GM12878 (cell line): ENCODE measurements at regions of chr13 and their contacts with region 1.

Region 1: GRCh38 chr13:110444226-110444653 is 117.3 kb downstream of the RAB20 start:
- DNase-seq: no peak
- ATAC-seq: peak; percentile 74
- H3K4me3 ChIP-seq: peak overlapping the region; percentile 30; the same call in 1 of the 2 replicates
- H3K27ac ChIP-seq: peak overlapping the region; percentile 45
- H3K4me1 ChIP-seq: peaks cover 41% of the 10 kb centered on the region
- H3K27me3 ChIP-seq: no peaks in the 10 kb centered on the region
- CTCF ChIP-seq: peak; percentile 44 to 60 (median 54)
- EP300 ChIP-seq: peak in 1 of 2 experiments; percentile 30; a peak in 1 of 4 replicates
- POLR2A ChIP-seq: no peak
- RAD21 ChIP-seq: peak; percentile 81

Region 2: DNA sequence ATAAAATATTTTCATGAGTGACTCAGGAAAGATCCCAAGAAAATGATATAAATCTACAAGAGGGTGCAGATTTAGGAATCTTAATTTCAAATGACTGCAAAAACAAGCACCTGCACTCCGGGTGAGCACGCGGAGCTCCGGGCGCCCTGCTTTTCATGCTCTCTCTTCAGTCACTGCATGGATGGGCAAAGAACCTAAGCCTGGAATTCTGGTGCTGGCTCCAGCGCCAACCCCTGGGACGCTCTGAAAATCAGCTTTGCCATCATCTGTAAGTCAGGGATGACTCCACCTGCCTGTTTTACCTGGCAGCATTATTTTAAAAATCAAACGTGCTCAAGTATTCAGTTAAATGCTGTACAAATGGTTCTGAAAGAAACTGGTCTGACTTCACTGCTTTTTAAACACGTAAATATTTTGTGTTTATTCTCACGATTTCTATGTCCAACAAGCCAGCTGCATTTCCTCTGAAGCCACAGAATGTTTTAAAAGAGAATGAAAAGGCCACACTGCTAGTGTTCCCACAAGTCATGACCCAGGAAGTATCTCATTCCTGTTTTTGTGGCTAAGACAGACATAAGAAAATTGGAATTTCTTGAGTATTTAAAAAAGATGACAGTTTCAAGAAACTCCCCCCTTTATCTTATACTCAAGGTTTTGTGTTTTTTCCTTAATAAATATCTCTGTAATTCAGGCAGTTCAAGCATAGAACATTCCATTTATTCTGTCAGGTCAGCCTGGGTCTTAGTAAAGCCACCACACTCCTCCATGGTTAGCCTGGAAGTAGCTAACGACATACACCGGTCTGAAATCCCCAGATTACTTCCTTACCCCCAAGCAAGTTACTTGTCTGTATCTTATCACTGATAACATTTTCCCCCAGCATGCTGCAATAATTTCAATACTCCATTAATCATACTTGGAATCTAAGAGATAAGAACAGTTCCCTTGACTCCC is 218.4 kb before region 1 on chr13:
- CTCF ChIA-PET with region 1: interaction called, 138 read pairs
- POLR2A ChIA-PET with region 1: interaction called, 6 read pairs
- RAD21 ChIA-PET with region 1: interaction called, 66 read pairs
- SMC1A ChIA-PET with region 1: interaction called, 91 read pairs
- in situ Hi-C with region 1: loop called (anchors 5 kb)
- intact Hi-C with region 1: loop called (anchors 1 kb)
- DNase-seq: no peak
- ATAC-seq: no peak
- H3K4me3 ChIP-seq: no peak overlapping the region
- H3K27ac ChIP-seq: no peak overlapping the region
- H3K4me1 ChIP-seq: no peaks in the 10 kb centered on the region
- H3K27me3 ChIP-seq: no peaks in the 10 kb centered on the region; a peak in 1 of 4 replicates
- CTCF ChIP-seq: no peak
- EP300 ChIP-seq: no peak
- POLR2A ChIP-seq: no peak
- RAD21 ChIP-seq: no peak

Region 3: GRCh38 chr13:110250258-110250891 is 193.9 kb before region 1 on chr13:
- CTCF ChIA-PET with region 1: interaction called, 24 read pairs
- POLR2A ChIA-PET with region 1: no interaction called
- RAD21 ChIA-PET with region 1: interaction called, 15 read pairs
- SMC1A ChIA-PET with region 1: interaction called, 19 read pairs
- in situ Hi-C with region 1: no loop called
- intact Hi-C with region 1: no loop called
- DNase-seq: no peak
- ATAC-seq: peak; percentile 30; the same call in 1 of the 3 replicates
- H3K4me3 ChIP-seq: no peak overlapping the region
- H3K27ac ChIP-seq: no peak overlapping the region
- H3K4me1 ChIP-seq: no peaks in the 10 kb centered on the region
- H3K27me3 ChIP-seq: no peaks in the 10 kb centered on the region
- CTCF ChIP-seq: no peak
- EP300 ChIP-seq: no peak
- POLR2A ChIP-seq: no peak
- RAD21 ChIP-seq: no peak

Region 4: GRCh38 chr13:110412132-110412914 is 31.9 kb before region 1 on chr13:
- CTCF ChIA-PET with region 1: interaction called, 41 read pairs
- POLR2A ChIA-PET with region 1: no interaction called
- RAD21 ChIA-PET with region 1: interaction called, 20 read pairs
- SMC1A ChIA-PET with region 1: interaction called, 21 read pairs
- in situ Hi-C with region 1: no loop called
- intact Hi-C with region 1: loop called (anchors 2 kb)
- DNase-seq: peak; percentile 40
- ATAC-seq: peak; percentile 87
- H3K4me3 ChIP-seq: no peak overlapping the region
- H3K27ac ChIP-seq: no peak overlapping the region
- H3K4me1 ChIP-seq: peaks cover 4% of the 10 kb centered on the region
- H3K27me3 ChIP-seq: no peaks in the 10 kb centered on the region
- CTCF ChIP-seq: peak; percentile 89 to 94 (median 93)
- EP300 ChIP-seq: no peak
- POLR2A ChIP-seq: no peak
- RAD21 ChIP-seq: peak; percentile 85

Region 5: GRCh38 chr13:110471833-110472162 is 27.6 kb after region 1 on chr13:
- CTCF ChIA-PET with region 1: interaction called, 5 read pairs
- POLR2A ChIA-PET with region 1: no interaction called
- RAD21 ChIA-PET with region 1: interaction called, 3 read pairs
- SMC1A ChIA-PET with region 1: no interaction called
- in situ Hi-C with region 1: no loop called
- intact Hi-C with region 1: loop called (anchors 1 kb)
- DNase-seq: peak; percentile 87
- ATAC-seq: peak; percentile 96
- H3K4me3 ChIP-seq: peak overlapping the region; percentile 42; the same call in 1 of the 2 replicates
- H3K27ac ChIP-seq: peak overlapping the region; percentile 60
- H3K4me1 ChIP-seq: peaks cover 37% of the 10 kb centered on the region
- H3K27me3 ChIP-seq: no peaks in the 10 kb centered on the region
- CTCF ChIP-seq: no peak
- EP300 ChIP-seq: peak; percentile 100
- POLR2A ChIP-seq: peak; percentile 68
- RAD21 ChIP-seq: peak; percentile 3; the same call in 1 of the 2 replicates

Region 6: DNA sequence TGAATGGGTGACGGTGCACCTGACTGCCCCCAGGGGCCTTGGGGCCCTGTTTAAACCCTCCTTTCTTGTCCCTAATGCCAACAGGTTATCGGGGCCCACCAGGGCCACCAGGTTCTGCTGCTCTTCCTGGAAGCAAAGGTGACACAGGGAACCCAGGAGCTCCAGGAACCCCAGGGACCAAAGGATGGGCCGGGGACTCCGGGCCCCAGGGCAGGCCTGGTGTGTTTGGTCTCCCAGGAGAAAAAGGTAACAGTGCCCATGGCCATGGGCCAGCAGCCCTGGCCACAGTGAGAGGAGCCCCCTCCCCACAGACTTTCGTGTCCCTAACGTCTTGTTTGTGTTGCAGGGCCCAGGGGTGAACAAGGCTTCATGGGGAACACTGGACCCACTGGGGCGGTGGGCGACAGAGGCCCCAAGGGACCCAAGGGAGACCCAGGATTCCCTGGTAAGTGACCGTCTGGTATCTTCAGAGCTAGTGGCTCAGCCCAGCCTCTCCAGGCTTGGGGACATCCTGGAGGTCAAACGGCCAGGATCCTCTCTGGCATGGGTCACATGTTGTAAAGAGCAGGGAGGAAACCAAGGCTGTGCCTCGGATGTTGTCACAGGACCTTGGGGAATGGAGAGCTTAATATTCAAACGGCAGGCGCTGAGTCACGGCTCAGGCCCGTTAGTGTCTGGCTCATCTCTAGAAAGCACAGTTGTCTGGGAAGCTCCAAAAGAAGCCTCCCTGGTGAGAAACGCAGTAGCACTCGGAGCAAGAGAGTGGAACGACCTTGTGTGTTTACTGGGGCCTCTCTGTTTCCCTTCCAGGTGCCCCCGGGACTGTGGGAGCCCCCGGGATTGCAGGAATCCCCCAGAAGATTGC is 59.0 kb after region 1 on chr13:
- CTCF ChIA-PET with region 1: no interaction called
- POLR2A ChIA-PET with region 1: no interaction called
- RAD21 ChIA-PET with region 1: no interaction called
- SMC1A ChIA-PET with region 1: no interaction called
- in situ Hi-C with region 1: no loop called
- intact Hi-C with region 1: no loop called
- DNase-seq: no peak
- ATAC-seq: peak; percentile 47
- H3K4me3 ChIP-seq: no peak overlapping the region
- H3K27ac ChIP-seq: no peak overlapping the region
- H3K4me1 ChIP-seq: no peaks in the 10 kb centered on the region; the same call in 1 of the 2 replicates
- H3K27me3 ChIP-seq: no peaks in the 10 kb centered on the region
- CTCF ChIP-seq: no peak
- EP300 ChIP-seq: no peak
- POLR2A ChIP-seq: no peak
- RAD21 ChIP-seq: no peak

Region 7: GRCh38 chr13:110915057-110915873 is 471.0 kb after region 1 on chr13 and contains the start of gene ANKRD10:
- CTCF ChIA-PET with region 1: no interaction called
- POLR2A ChIA-PET with region 1: no interaction called
- RAD21 ChIA-PET with region 1: no interaction called
- SMC1A ChIA-PET with region 1: no interaction called
- in situ Hi-C with region 1: no loop called
- intact Hi-C with region 1: loop called (anchors 10 kb)
- DNase-seq: peak; percentile 82
- ATAC-seq: peak; percentile 84
- H3K4me3 ChIP-seq: peak within 1 kb of the TSS; percentile 93
- H3K27ac ChIP-seq: peak within 1 kb of the TSS; percentile 91
- H3K4me1 ChIP-seq: peaks cover 23% of the 10 kb centered on the region
- H3K27me3 ChIP-seq: no peaks in the 10 kb centered on the region
- CTCF ChIP-seq: peak; percentile 67 to 86 (median 84)
- EP300 ChIP-seq: no peak
- POLR2A ChIP-seq: peak; percentile 80
- RAD21 ChIP-seq: peak; percentile 65
- polyA plus RNA-seq, gene ANKRD10: 47.1 to 62.3 TPM